IMR-90 (cell line): ENCODE measurements at regions of chr9 and their contacts with region 1.

Region 1: DNA sequence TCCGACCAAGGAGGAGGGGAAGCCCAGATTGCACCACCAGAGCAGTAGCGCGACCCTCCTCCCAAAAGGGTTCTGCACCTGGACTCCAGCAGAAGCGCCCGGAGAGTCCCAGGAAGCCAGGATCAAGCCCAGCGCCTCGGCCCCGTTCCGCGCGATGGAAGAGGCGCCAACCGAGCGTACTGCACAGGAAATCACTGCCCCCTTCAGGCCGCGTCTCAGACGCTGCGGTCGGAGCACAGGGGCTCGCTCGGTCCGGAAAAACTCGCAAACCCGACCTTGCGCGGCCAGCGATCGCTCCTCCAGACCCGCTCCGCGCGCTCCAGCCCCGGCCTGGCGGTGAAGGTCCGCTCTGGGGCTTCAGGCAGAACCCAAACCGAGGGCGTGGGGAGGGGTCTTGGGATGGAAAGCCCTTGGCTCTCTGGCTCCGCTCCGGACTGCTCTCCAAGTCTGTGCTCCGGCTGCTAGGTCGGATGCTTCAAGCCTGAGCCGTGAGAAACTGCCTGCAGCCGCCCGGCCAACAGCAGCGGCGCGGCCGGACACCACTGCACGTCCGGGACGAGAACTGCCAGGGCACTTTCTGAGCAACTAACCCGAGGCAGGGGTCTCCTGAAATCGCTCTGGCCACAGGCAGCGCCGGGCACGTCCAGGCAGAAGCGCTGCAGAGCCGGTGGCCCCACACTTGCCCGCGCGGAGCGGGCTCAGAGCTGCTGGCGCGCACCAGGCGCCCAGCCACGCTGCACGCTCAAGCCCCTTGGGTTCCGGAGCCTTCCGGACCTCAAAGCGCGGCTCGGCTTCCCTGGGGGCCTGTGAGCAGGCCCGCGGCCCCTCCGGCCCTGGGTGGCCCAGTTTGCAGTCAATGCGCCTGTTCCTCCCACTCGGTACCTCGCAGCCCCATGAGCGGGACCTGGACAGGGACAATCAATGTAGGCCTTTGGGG is 1.3 kb downstream of the GABBR2 start:
- DNase-seq: peak; percentile 85
- ATAC-seq: peak; percentile 86
- H3K4me3 ChIP-seq: peak overlapping the region; percentile 45
- H3K27ac ChIP-seq: peak overlapping the region; percentile 50
- H3K4me1 ChIP-seq: peaks cover 5% of the 10 kb centered on the region
- H3K27me3 ChIP-seq: peaks cover 10% of the 10 kb centered on the region
- CTCF ChIP-seq: peak; percentile 79
- POLR2A ChIP-seq: no peak
- RAD21 ChIP-seq: peak; percentile 89

Region 2: DNA sequence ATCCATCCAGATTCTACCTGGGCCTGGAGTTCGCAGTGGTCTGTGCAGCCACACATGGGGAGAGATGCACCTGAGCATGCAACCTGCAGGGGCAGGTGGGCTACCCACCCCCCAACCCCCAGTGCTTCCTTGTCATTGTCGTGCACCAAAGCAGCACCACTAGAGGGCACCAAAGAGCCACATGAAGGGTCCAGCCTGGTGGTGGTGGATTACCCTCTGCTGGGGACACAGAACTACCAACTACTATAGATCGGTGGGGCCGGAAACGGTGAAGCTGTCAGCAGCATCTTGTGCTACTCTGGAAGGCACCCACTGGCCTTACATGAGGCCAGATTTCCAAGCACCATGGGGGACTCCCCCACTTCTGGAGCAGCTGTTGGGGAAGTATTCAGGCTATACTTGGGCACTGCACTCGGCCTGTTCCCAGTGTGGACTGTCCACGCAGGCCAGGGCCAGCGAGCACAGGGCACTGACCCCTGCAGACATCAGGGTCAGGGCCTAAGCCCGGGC is 391.8 kb before region 1 on chr9:
- CTCF ChIA-PET with region 1: interaction called, 6 read pairs
- POLR2A ChIA-PET with region 1: no interaction called
- dilution Hi-C with region 1: no loop called
- in situ Hi-C with region 1: loop called (anchors 5 kb)
- intact Hi-C with region 1: loop called (anchors 1 kb)
- DNase-seq: peak; percentile 89
- ATAC-seq: peak; percentile 81
- H3K4me3 ChIP-seq: no peak overlapping the region
- H3K27ac ChIP-seq: no peak overlapping the region
- H3K4me1 ChIP-seq: peaks cover 23% of the 10 kb centered on the region
- H3K27me3 ChIP-seq: no peaks in the 10 kb centered on the region
- CTCF ChIP-seq: peak; percentile 98
- POLR2A ChIP-seq: peak; percentile 48; the same call in 1 of the 2 replicates
- RAD21 ChIP-seq: peak; percentile 100

Region 3: GRCh38 chr9:98488571-98489312 is 218.7 kb before region 1 on chr9:
- CTCF ChIA-PET with region 1: interaction called, 3 read pairs
- POLR2A ChIA-PET with region 1: no interaction called
- dilution Hi-C with region 1: no loop called
- in situ Hi-C with region 1: no loop called
- intact Hi-C with region 1: loop called (anchors 1 kb)
- DNase-seq: peak; percentile 98
- ATAC-seq: peak; percentile 96
- H3K4me3 ChIP-seq: no peak overlapping the region
- H3K27ac ChIP-seq: peak overlapping the region; percentile 82
- H3K4me1 ChIP-seq: peaks cover 25% of the 10 kb centered on the region
- H3K27me3 ChIP-seq: no peaks in the 10 kb centered on the region
- CTCF ChIP-seq: peak; percentile 28; the same call in 1 of the 2 replicates
- POLR2A ChIP-seq: peak; percentile 38; the same call in 1 of the 2 replicates
- RAD21 ChIP-seq: no peak

Region 4: GRCh38 chr9:98607787-98608186 is 99.6 kb before region 1 on chr9:
- CTCF ChIA-PET with region 1: no interaction called
- POLR2A ChIA-PET with region 1: no interaction called
- dilution Hi-C with region 1: no loop called
- in situ Hi-C with region 1: no loop called
- intact Hi-C with region 1: loop called (anchors 10 kb)
- DNase-seq: peak; percentile 97
- ATAC-seq: peak; percentile 55
- H3K4me3 ChIP-seq: no peak overlapping the region
- H3K27ac ChIP-seq: peak overlapping the region; percentile 74
- H3K4me1 ChIP-seq: peaks cover 51% of the 10 kb centered on the region
- H3K27me3 ChIP-seq: no peaks in the 10 kb centered on the region
- CTCF ChIP-seq: no peak
- POLR2A ChIP-seq: peak; percentile 33; the same call in 1 of the 2 replicates
- RAD21 ChIP-seq: no peak; the same call in 1 of the 2 replicates

Region 5: DNA sequence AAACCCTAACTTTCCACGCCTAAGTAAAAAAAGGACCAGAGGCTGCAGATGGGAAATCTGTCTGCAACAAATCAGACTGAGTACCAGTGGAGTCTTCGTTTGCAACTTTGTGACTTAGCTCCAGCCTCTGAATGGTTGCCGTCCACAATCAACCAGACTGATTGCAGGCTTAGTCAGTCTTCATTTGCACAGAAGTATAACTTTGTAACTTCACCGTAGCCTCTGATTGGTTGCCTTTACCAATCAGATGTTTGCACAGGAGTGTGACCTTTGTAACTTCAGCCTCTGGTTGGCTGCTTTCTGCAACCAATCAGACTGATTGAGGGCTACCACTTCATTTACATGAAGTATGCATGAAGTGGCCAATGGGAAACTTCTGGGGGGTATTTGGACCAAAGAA is 451.2 kb after region 1 on chr9:
- CTCF ChIA-PET with region 1: no interaction called
- POLR2A ChIA-PET with region 1: no interaction called
- dilution Hi-C with region 1: no loop called
- in situ Hi-C with region 1: no loop called
- intact Hi-C with region 1: no loop called
- DNase-seq: no peak
- ATAC-seq: no peak
- H3K4me3 ChIP-seq: no peak overlapping the region
- H3K27ac ChIP-seq: no peak overlapping the region
- H3K4me1 ChIP-seq: peaks cover 3% of the 10 kb centered on the region
- H3K27me3 ChIP-seq: no peaks in the 10 kb centered on the region
- CTCF ChIP-seq: no peak
- POLR2A ChIP-seq: no peak
- RAD21 ChIP-seq: no peak